GM12878 (cell line): ENCODE measurements at regions of chr20 and their contacts with region 1.

Region 1: DNA sequence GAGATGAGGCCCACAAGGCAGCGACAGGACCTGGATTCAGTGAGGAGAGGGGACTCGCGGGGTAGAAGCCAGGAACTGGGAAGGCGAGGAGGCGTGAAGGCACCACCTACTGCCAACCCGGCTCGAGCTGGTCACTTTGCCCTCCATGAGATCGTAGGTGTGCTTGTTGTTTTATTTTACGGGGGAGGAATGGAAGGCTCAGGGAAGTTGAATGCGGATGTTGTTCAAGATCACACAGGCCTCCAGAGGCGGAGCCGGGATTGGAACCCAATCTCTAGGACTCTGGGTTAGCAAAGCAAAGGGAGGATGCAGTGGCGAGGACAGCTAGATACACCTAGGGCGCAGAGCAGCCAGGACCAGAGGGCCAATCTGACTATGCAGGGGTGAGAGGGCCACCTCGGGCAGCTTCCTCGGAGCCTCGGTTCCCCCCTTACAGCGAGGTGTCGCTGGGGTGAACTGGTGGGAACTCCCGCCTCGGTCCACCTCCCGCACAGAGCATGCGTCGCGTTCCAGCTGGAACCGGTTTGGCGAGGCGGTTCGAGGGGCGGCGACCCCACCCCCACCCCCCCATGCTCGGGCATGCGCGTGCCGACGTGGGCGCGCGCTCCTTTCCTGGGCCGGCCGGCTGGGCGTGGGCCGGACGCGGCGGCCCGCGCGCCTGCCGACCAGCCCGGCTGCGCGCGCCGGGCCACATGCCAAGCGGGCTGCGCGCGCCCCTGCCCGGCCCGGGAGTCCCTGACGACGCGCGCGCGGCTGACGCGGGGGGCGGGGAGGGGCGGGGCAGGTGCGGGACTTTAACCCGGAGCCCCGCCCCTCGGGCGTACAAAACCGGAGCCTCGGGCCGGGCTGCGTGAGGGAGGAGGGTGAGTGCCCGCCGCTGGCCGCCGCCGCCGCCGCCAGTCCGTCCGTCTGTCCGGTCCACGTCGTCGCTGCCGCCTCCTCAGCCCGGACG is 80.4 kb upstream of the MYL9 start:
- DNase-seq: peak; percentile 65
- ATAC-seq: peak; percentile 76
- H3K4me3 ChIP-seq: no peak overlapping the region
- H3K27ac ChIP-seq: peak overlapping the region; percentile 77
- H3K4me1 ChIP-seq: peaks cover 31% of the 10 kb centered on the region
- H3K27me3 ChIP-seq: no peaks in the 10 kb centered on the region
- CTCF ChIP-seq: no peak
- EP300 ChIP-seq: no peak
- POLR2A ChIP-seq: peak; percentile 89
- RAD21 ChIP-seq: no peak

Region 2: DNA sequence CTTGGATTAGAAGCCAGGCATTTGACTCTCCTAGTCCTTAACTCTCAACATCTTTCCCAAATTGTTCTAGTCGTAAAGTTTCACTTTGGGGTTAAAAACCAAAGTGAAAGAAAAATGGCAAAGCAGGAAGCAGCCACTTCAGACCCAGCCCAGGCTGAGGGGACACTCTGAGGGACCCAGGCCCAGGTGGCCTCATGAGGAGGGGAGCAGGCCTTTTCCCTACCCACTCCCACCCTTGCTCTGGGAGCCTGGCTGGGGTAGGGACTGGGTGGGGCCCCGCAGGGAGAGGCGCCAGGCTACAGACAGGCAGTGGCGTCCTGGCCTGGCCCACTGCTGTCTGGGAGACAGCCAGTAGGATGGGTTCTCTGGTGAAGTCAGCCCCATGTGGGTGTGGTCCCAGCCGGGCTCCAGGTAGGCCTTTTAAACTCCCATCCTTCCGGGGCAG is 11.7 kb after region 1 on chr20:
- CTCF ChIA-PET with region 1: interaction called, 11 read pairs
- POLR2A ChIA-PET with region 1: interaction called, 9 read pairs
- RAD21 ChIA-PET with region 1: interaction called, 4 read pairs
- SMC1A ChIA-PET with region 1: interaction called, 3 read pairs
- in situ Hi-C with region 1: no loop called
- intact Hi-C with region 1: no loop called
- DNase-seq: no peak
- ATAC-seq: peak; percentile 78
- H3K4me3 ChIP-seq: peak overlapping the region; percentile 10
- H3K27ac ChIP-seq: peak overlapping the region; percentile 74
- H3K4me1 ChIP-seq: peaks cover 30% of the 10 kb centered on the region
- H3K27me3 ChIP-seq: no peaks in the 10 kb centered on the region
- CTCF ChIP-seq: no peak
- EP300 ChIP-seq: no peak
- POLR2A ChIP-seq: peak; percentile 76
- RAD21 ChIP-seq: no peak

Region 3: DNA sequence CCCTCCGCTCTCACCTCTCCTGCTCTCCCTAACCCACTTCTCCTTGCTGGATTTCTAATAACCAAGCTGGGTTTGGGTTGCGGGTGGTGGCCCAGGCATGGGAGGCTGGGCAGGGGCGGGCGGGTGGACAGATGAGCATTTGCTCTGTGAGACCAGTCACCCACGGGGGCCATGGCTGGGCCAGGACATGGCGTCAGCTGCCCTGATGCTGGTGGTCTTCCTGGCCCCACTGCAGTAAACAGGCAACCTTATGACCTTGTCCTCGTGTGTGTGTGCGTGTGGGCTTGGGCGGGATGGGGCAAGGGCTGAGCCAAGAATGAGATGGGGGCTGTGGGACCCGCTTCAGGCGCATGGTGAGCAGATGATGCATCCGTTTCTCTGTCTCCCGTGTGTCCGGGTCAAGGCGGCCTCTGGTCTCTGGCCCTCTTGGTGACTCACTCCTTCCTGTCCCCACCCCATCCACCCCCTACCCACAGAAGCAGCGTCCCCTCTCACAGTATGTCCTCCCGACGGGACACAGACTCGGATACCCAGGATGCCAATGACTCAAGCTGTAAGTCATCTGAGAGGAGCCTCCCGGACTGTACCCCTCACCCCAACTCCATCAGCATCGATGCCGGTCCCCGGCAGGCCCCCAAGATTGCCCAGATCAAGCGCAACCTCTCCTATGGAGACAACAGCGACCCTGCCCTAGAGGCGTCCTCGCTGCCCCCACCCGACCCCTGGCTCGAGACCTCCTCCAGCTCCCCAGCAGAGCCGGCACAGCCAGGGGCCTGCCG is 39.0 kb after region 1 on chr20:
- CTCF ChIA-PET with region 1: interaction called, 4 read pairs
- POLR2A ChIA-PET with region 1: interaction called, 3 read pairs
- RAD21 ChIA-PET with region 1: interaction called, 24 read pairs
- SMC1A ChIA-PET with region 1: interaction called, 10 read pairs
- in situ Hi-C with region 1: no loop called
- intact Hi-C with region 1: no loop called
- DNase-seq: no peak
- ATAC-seq: no peak
- H3K4me3 ChIP-seq: no peak overlapping the region
- H3K27ac ChIP-seq: no peak overlapping the region
- H3K4me1 ChIP-seq: no peaks in the 10 kb centered on the region
- H3K27me3 ChIP-seq: no peaks in the 10 kb centered on the region
- CTCF ChIP-seq: no peak
- EP300 ChIP-seq: no peak
- POLR2A ChIP-seq: no peak; the same call in 1 of the 2 replicates
- RAD21 ChIP-seq: no peak

Region 4: GRCh38 chr20:36591854-36592641 is 131.1 kb after region 1 on chr20:
- CTCF ChIA-PET with region 1: interaction called, 4 read pairs
- POLR2A ChIA-PET with region 1: interaction called, 14 read pairs
- RAD21 ChIA-PET with region 1: interaction called, 4 read pairs
- SMC1A ChIA-PET with region 1: interaction called, 21 read pairs
- in situ Hi-C with region 1: no loop called
- intact Hi-C with region 1: loop called (anchors 5 kb)
- DNase-seq: no peak
- ATAC-seq: no peak
- H3K4me3 ChIP-seq: no peak overlapping the region
- H3K27ac ChIP-seq: no peak overlapping the region
- H3K4me1 ChIP-seq: peaks cover 41% of the 10 kb centered on the region
- H3K27me3 ChIP-seq: no peaks in the 10 kb centered on the region
- CTCF ChIP-seq: peak in 2 of 3 experiments; percentile 23 to 43; a peak in 3 of 6 replicates
- EP300 ChIP-seq: no peak
- POLR2A ChIP-seq: no peak
- RAD21 ChIP-seq: no peak

Region 5: GRCh38 chr20:36605399-36606157 is 144.7 kb after region 1 on chr20 and contains the start of gene RAB5IF:
- CTCF ChIA-PET with region 1: interaction called, 5 read pairs
- POLR2A ChIA-PET with region 1: interaction called, 13 read pairs
- RAD21 ChIA-PET with region 1: interaction called, 6 read pairs
- SMC1A ChIA-PET with region 1: interaction called, 8 read pairs
- in situ Hi-C with region 1: no loop called
- intact Hi-C with region 1: no loop called
- DNase-seq: peak; percentile 99
- ATAC-seq: peak; percentile 92
- H3K4me3 ChIP-seq: peak within 1 kb of the TSS; percentile 98
- H3K27ac ChIP-seq: peak within 1 kb of the TSS; percentile 97
- H3K4me1 ChIP-seq: peaks cover 20% of the 10 kb centered on the region
- H3K27me3 ChIP-seq: no peaks in the 10 kb centered on the region
- CTCF ChIP-seq: peak; percentile 94 to 99 (median 96); a peak in 5 of 6 replicates
- EP300 ChIP-seq: peak in 1 of 2 experiments; percentile 54; a peak in 1 of 4 replicates
- POLR2A ChIP-seq: peak; percentile 96
- RAD21 ChIP-seq: peak; percentile 61
- polyA plus RNA-seq, gene RAB5IF: 19.4 to 62.9 TPM

Region 6: GRCh38 chr20:36847009-36847709 is 386.2 kb after region 1 on chr20:
- CTCF ChIA-PET with region 1: no interaction called
- POLR2A ChIA-PET with region 1: no interaction called
- RAD21 ChIA-PET with region 1: interaction called, 3 read pairs
- SMC1A ChIA-PET with region 1: no interaction called
- in situ Hi-C with region 1: no loop called
- intact Hi-C with region 1: loop called (anchors 10 kb)
- DNase-seq: no peak
- ATAC-seq: no peak
- H3K4me3 ChIP-seq: no peak overlapping the region
- H3K27ac ChIP-seq: no peak overlapping the region
- H3K4me1 ChIP-seq: peaks cover 80% of the 10 kb centered on the region
- H3K27me3 ChIP-seq: no peaks in the 10 kb centered on the region
- CTCF ChIP-seq: no peak
- EP300 ChIP-seq: no peak
- POLR2A ChIP-seq: no peak
- RAD21 ChIP-seq: no peak